Activated CD4-positive, alpha-beta T cell treated with anti-CD3 and anti-CD28 coated beads for 36 hours (primary cell): ENCODE measurements at regions of chr22 and their contacts with region 1.

Region 1: GRCh38 chr22:40645579-40646197 is 9.2 kb upstream of the MRTFA start:
- DNase-seq: no peak
- ATAC-seq: no peak
- H3K4me3 Mint-ChIP-seq: no peak overlapping the region
- H3K27ac Mint-ChIP-seq: no peak overlapping the region
- H3K4me1 Mint-ChIP-seq: peaks cover 16% of the 10 kb centered on the region
- H3K27me3 Mint-ChIP-seq: no peaks in the 10 kb centered on the region

Region 2: GRCh38 chr22:40487663-40488249 is 157.9 kb before region 1 on chr22:
- CTCF ChIA-PET with region 1: interaction called, 13 read pairs
- POLR2A ChIA-PET with region 1: no interaction called
- intact Hi-C with region 1: loop called in 1 of 2 experiments (anchors 1 kb)
- DNase-seq: no peak
- ATAC-seq: peak; percentile 64
- H3K4me3 Mint-ChIP-seq: no peak overlapping the region
- H3K27ac Mint-ChIP-seq: no peak overlapping the region
- H3K4me1 Mint-ChIP-seq: peaks cover 45% of the 10 kb centered on the region
- H3K27me3 Mint-ChIP-seq: no peaks in the 10 kb centered on the region

Region 3: GRCh38 chr22:40525249-40525884 is 120.3 kb before region 1 on chr22:
- CTCF ChIA-PET with region 1: interaction called, 48 read pairs
- POLR2A ChIA-PET with region 1: interaction called, 4 read pairs
- intact Hi-C with region 1: loop called (anchors 1 kb)
- DNase-seq: peak; percentile 87
- ATAC-seq: peak; percentile 65
- H3K4me3 Mint-ChIP-seq: no peak overlapping the region
- H3K27ac Mint-ChIP-seq: peak overlapping the region; percentile 16
- H3K4me1 Mint-ChIP-seq: peaks cover 53% of the 10 kb centered on the region
- H3K27me3 Mint-ChIP-seq: no peaks in the 10 kb centered on the region

Region 4: GRCh38 chr22:40567106-40567505 is 78.6 kb before region 1 on chr22:
- CTCF ChIA-PET with region 1: no interaction called
- POLR2A ChIA-PET with region 1: no interaction called
- intact Hi-C with region 1: no loop called
- DNase-seq: no peak
- ATAC-seq: no peak
- H3K4me3 Mint-ChIP-seq: no peak overlapping the region
- H3K27ac Mint-ChIP-seq: no peak overlapping the region
- H3K4me1 Mint-ChIP-seq: peaks cover 4% of the 10 kb centered on the region
- H3K27me3 Mint-ChIP-seq: no peaks in the 10 kb centered on the region

Region 5: DNA sequence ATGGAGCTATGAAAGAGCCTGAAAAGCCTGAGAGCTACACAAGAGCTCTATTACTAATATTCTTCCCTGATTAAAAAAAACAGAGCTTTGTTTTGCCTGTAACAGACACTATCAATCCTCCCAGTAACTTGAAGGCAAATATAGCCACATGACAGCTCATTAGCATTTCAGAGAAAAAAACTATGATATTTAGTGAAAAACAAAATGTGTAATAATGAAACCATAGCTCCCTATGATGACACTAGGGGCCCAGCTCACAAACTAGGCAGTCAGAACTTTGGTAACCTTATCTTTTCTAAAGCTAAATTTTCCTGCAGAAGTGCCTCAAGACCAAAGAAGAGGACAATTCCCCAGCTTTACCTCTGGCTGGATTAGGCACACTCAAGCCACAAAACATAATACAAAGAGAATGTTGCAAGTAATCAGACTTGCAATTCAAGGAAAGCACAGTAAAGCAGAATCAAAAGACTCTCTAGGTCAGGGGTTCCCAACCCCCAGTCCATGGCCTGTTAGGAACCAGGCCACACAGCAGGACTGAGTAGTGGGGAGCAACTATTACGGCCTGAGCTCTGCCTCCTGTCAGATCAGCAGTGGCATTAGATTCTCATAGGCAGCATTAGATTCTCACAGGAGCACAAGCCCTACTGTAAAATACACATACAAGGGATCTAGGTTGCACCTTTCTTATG is 62.5 kb before region 1 on chr22:
- CTCF ChIA-PET with region 1: interaction called, 10 read pairs
- POLR2A ChIA-PET with region 1: no interaction called
- intact Hi-C with region 1: no loop called
- DNase-seq: peak; percentile 42
- ATAC-seq: peak; percentile 81
- H3K4me3 Mint-ChIP-seq: peak overlapping the region; percentile 17
- H3K27ac Mint-ChIP-seq: peak overlapping the region; percentile 80
- H3K4me1 Mint-ChIP-seq: peaks cover 35% of the 10 kb centered on the region
- H3K27me3 Mint-ChIP-seq: no peaks in the 10 kb centered on the region

Region 6: DNA sequence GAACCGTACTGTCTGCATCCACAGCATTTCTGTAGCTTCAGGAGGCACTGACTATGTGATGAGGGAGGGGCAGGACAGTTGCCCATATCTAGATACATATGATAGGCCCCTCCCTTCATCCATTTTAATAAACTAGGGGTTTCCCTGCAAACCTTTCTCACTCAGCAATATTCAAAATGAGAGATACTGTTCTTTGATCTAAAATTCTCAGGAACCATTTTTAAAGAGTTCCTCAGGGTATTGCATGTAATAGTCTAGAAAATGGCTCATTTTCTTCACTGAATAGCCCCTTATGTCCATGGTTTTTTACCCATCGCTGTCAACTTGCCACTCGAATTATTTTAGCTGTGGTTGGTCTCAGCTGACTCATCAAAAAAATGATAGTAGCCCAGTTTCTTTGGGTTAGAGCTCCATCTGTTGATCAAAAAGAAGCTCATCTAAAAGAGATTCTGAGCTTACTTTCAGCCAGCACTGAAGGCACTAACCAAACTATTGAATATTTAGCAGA is 253.2 kb after region 1 on chr22:
- CTCF ChIA-PET with region 1: interaction called, 10 read pairs
- POLR2A ChIA-PET with region 1: no interaction called
- intact Hi-C with region 1: loop called in 1 of 2 experiments (anchors 10 kb)
- DNase-seq: peak; percentile 38
- ATAC-seq: peak; percentile 94
- H3K4me3 Mint-ChIP-seq: peak overlapping the region; percentile 15
- H3K27ac Mint-ChIP-seq: peak overlapping the region; percentile 81
- H3K4me1 Mint-ChIP-seq: peaks cover 14% of the 10 kb centered on the region
- H3K27me3 Mint-ChIP-seq: no peaks in the 10 kb centered on the region